Activated CD8-positive, alpha-beta T cell treated with anti-CD3 and anti-CD28 coated beads, Interleukin-2, amount 10 ng/mL, durations not matched to agents 7 days and 5 days (primary cell): ENCODE measurements at regions of chrX and their contacts with region 1.

Region 1: DNA sequence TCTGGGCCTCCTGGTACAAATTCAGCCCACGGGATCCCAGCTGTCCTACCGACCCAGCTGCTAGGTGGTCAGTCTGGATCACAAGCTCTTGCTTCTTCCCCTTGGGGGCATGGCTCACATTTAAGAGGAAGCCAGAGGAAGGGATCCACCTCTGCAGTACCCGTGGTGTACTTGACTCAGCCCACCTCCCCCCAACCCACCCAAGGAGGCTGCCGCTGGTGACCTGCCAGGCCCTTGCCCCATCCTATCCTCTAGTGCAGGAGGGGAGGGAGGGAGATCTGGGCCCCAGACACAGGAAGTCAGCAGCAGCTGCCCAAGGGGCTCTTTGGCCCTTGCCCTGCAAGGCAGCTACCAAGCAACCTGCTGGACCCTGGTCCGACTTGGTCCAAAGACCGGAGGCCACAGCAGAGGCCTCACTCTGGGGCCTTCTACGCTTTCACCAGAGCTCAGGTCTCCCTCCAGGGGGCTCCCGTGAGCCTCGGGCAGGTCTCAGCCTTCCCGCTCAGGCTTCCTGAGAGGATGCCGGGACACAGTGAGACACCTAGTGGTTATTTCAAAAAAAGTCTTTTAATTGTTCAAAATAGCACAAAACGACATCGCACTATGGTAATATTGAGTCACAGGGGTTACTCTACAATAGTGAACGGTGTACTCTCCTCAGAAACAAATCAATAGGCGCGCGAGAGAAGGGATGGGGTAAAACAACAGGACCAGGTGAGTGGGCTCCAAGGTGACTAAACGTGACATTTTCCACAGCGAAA is 2.7 kb upstream of the RENBP start:
- DNase-seq: peak; percentile 83
- ATAC-seq: peak; percentile 76
- H3K4me3 Mint-ChIP-seq: no peak overlapping the region
- H3K27ac Mint-ChIP-seq: peak overlapping the region; percentile 82
- H3K4me1 Mint-ChIP-seq: peaks cover 49% of the 10 kb centered on the region
- H3K27me3 Mint-ChIP-seq: no peaks in the 10 kb centered on the region

Region 2: DNA sequence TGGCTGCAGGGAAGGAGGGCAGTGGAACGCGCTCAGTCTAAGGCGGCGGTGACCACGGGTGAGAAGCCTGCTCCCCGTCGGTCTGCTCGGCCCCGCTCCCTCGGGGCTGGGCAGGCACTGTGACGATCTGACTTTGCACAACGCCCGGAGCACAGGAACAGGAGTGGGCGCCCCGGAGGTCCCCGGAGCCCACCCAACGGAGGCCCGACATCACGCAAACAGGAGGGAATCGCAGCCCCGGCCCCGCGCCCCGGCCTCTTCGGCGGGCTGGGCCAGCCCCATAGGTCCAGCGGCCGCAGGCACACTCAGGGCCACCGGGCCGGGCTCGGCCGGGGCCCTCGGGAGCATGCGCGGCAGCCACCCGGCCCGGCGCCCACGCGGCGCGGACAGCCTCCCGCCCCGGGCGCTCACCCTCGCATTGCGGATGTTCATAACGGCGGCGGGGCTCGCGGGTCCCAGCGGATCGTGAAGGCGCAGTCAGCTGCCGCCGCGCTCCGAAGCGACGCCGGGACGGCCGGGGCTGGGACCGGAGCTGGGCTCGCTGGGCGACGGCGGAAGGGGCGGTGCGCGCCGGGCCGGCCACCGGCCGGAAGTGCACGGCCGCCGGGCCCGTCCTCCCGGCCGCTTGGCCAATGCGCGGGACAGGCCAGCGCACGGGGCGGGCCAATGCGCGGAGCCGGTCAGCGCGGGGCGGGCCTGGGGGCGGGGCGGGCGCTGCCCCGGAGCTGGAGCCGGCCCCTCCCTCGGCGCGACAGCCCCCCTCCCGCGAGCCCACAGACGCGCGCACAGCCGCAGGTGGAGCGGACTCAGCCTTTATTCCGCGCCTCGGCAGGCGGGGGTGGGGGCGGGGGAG is 12.5 kb before region 1 on chrX and contains the start of gene NAA10:
- CTCF ChIA-PET with region 1: interaction called, 228 read pairs
- POLR2A ChIA-PET with region 1: interaction called, 84 read pairs
- DNase-seq: peak; percentile 62
- ATAC-seq: peak; percentile 93
- H3K4me3 Mint-ChIP-seq: peak within 1 kb of the TSS; percentile 88
- H3K27ac Mint-ChIP-seq: peak within 1 kb of the TSS; percentile 85
- H3K4me1 Mint-ChIP-seq: peaks cover 30% of the 10 kb centered on the region
- H3K27me3 Mint-ChIP-seq: no peaks in the 10 kb centered on the region
- total RNA-seq, gene NAA10: 98.9 to 106 TPM